IMR-90 (cell line): ENCODE measurements at regions of chr13 and their contacts with region 1.

Region 1: DNA sequence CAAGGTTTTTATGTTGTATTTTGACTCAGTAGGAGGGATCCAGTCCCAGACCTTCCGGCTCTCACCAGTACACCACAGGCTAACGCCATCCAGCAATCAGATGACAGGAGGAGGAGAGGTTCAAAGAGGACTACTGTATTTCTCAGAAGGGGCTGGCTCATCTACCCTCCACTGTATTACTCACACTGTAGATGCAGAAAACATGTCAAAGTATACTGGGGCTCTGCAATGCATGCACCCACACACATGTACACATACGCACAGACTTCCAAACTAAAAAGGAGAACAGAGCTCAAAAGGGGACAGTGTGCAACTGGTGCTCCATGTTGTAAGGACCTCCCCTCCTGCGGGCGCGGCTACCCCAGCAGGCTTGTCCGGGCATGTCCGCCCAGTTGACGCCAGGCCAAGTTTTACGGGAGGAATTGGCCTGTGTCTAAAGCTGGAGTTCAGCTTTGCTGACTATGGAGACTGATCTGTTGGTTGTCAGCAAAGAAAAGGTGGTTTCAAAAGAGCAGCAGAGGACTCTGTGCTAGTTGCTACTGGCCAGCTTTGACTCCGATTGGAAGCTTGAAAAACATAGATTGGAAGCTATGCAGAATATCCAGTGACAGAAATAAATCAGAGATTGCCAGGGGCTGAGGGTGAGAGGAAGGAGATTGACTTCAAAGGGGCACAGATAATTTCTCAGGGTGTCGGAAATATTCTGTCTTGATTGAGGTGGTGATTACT is 314.2 kb downstream of the DLEU7 start:
- DNase-seq: peak; percentile 89
- ATAC-seq: peak; percentile 92
- H3K4me3 ChIP-seq: peak overlapping the region; percentile 5; the same call in 1 of the 2 replicates
- H3K27ac ChIP-seq: peak overlapping the region; percentile 83
- H3K4me1 ChIP-seq: peaks cover 18% of the 10 kb centered on the region
- H3K27me3 ChIP-seq: no peaks in the 10 kb centered on the region
- CTCF ChIP-seq: no peak
- POLR2A ChIP-seq: 0 out of 2 replicates have a peak, but pooled peaks have one; percentile 25
- RAD21 ChIP-seq: no peak

Region 2: GRCh38 chr13:49976314-49977258 is 552.7 kb before region 1 on chr13:
- CTCF ChIA-PET with region 1: no interaction called
- POLR2A ChIA-PET with region 1: no interaction called
- dilution Hi-C with region 1: no loop called
- in situ Hi-C with region 1: loop called (anchors 10 kb)
- intact Hi-C with region 1: loop called (anchors 1 kb)
- DNase-seq: peak; percentile 70
- ATAC-seq: peak; percentile 86
- H3K4me3 ChIP-seq: no peak overlapping the region
- H3K27ac ChIP-seq: no peak overlapping the region
- H3K4me1 ChIP-seq: peaks cover 4% of the 10 kb centered on the region
- H3K27me3 ChIP-seq: no peaks in the 10 kb centered on the region
- CTCF ChIP-seq: peak; percentile 86
- POLR2A ChIP-seq: no peak
- RAD21 ChIP-seq: peak; percentile 94

Region 3: DNA sequence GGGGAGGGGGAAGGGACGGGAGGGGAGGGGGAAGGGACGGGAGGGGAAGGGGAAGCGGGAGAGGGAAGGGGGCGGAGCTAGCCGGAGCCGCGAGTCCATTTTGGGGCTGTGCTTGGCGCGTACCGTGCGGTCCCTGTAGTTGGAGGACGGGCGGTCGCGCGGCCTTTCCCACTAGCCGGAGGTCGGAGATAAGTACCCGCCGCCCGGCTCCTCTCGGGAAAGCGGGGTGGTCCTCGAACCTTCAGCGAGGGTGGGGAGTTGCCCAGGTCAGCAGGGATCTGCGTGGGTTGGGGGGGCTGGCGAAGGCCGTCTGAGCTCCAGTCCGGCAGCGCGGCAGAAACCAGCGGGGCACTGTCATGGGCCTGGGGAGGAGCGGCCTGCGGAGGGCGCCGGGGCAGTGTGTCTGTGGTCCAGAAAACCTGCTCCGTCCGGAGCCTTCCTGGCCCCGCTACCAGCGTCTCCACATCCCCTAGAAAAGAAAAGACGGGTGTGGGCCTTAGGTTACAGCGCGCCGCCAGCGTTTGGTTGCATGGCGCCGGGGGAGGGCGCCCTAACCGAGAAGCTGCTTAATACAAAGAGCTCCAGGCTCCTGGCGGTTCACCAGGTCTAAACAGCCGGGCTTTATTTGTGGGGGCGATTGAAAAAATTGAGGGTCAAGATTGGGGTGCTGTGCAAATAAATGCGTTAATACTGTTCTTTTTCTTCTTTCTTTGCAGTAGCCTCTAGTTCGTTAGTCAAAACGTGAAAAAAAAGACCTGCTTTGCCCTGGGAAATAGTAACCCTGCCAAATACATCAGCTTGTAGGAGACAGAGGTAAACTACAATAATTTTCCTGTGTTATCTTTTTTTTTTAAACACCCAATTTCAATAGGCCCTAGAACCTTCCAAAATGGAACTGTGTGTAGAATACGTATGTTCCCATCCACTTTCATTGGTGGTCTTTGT is 532.1 kb before region 1 on chr13 and contains the start of gene TRIM13:
- CTCF ChIA-PET with region 1: interaction called, 8 read pairs
- POLR2A ChIA-PET with region 1: no interaction called
- dilution Hi-C with region 1: no loop called
- in situ Hi-C with region 1: no loop called
- intact Hi-C with region 1: loop called (anchors 1 kb)
- DNase-seq: peak; percentile 88
- ATAC-seq: peak; percentile 87
- H3K4me3 ChIP-seq: peak within 1 kb of the TSS; percentile 87
- H3K27ac ChIP-seq: peak within 1 kb of the TSS; percentile 98
- H3K4me1 ChIP-seq: peaks cover 4% of the 10 kb centered on the region
- H3K27me3 ChIP-seq: no peaks in the 10 kb centered on the region
- CTCF ChIP-seq: peak; percentile 82
- POLR2A ChIP-seq: peak; percentile 87
- RAD21 ChIP-seq: peak; percentile 68
- total RNA-seq, gene TRIM13: 20.1 and 22.5 TPM in 2 replicates

Region 4: GRCh38 chr13:50222569-50223332 is 306.6 kb before region 1 on chr13:
- CTCF ChIA-PET with region 1: no interaction called
- POLR2A ChIA-PET with region 1: no interaction called
- dilution Hi-C with region 1: no loop called
- in situ Hi-C with region 1: no loop called
- intact Hi-C with region 1: loop called (anchors 10 kb)
- DNase-seq: peak; percentile 68
- ATAC-seq: peak; percentile 84
- H3K4me3 ChIP-seq: peak overlapping the region; percentile 37
- H3K27ac ChIP-seq: peak overlapping the region; percentile 69; the same call in 1 of the 2 replicates
- H3K4me1 ChIP-seq: peaks cover 2% of the 10 kb centered on the region; the same call in 1 of the 2 replicates
- H3K27me3 ChIP-seq: peaks cover 8% of the 10 kb centered on the region
- CTCF ChIP-seq: no peak
- POLR2A ChIP-seq: no peak
- RAD21 ChIP-seq: no peak

Region 5: GRCh38 chr13:50801087-50801931 is 272.0 kb after region 1 on chr13:
- CTCF ChIA-PET with region 1: no interaction called
- POLR2A ChIA-PET with region 1: no interaction called
- dilution Hi-C with region 1: no loop called
- in situ Hi-C with region 1: no loop called
- intact Hi-C with region 1: loop called (anchors 5 kb)
- DNase-seq: peak; percentile 72
- ATAC-seq: peak; percentile 97
- H3K4me3 ChIP-seq: no peak overlapping the region
- H3K27ac ChIP-seq: no peak overlapping the region
- H3K4me1 ChIP-seq: peaks cover 1% of the 10 kb centered on the region; the same call in 1 of the 2 replicates
- H3K27me3 ChIP-seq: peaks cover 18% of the 10 kb centered on the region
- CTCF ChIP-seq: peak; percentile 82
- POLR2A ChIP-seq: no peak
- RAD21 ChIP-seq: peak; percentile 90